AG04450 (cell line): ENCODE measurements at regions of chr3 and their contacts with region 1.

Region 1: GRCh38 chr3:141000027-141000663 is 51.0 kb upstream of the SPSB4 start:
- DNase-seq: peak; percentile 7
- H3K4me3 ChIP-seq: no peak overlapping the region
- H3K27ac ChIP-seq: no peak overlapping the region
- H3K27me3 ChIP-seq: peaks cover 6% of the 10 kb centered on the region
- CTCF ChIP-seq: peak; percentile 78

Region 2: DNA sequence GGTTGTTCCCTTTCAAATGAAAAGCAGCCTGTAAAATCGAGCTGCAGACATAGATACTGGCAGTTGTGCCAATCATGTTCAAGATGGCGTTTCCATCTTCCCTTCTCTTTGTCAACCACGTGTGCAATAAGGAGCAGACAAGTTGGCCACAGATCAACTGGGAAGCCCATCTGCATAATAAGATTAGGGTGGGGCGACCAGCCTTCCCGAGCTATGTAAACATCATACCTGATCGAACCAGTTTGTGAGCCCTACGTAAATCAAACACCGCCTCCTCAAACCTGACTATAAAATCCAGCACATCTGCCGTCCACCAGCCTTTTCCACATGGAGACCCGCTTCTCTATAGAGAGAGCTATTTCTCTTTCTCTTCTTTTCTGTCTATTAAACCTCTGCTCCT is 285.1 kb before region 1 on chr3:
- CTCF ChIA-PET with region 1: no interaction called
- POLR2A ChIA-PET with region 1: no interaction called
- DNase-seq: no peak
- H3K4me3 ChIP-seq: no peak overlapping the region
- H3K27ac ChIP-seq: no peak overlapping the region
- H3K27me3 ChIP-seq: no peaks in the 10 kb centered on the region
- CTCF ChIP-seq: no peak

Region 3: DNA sequence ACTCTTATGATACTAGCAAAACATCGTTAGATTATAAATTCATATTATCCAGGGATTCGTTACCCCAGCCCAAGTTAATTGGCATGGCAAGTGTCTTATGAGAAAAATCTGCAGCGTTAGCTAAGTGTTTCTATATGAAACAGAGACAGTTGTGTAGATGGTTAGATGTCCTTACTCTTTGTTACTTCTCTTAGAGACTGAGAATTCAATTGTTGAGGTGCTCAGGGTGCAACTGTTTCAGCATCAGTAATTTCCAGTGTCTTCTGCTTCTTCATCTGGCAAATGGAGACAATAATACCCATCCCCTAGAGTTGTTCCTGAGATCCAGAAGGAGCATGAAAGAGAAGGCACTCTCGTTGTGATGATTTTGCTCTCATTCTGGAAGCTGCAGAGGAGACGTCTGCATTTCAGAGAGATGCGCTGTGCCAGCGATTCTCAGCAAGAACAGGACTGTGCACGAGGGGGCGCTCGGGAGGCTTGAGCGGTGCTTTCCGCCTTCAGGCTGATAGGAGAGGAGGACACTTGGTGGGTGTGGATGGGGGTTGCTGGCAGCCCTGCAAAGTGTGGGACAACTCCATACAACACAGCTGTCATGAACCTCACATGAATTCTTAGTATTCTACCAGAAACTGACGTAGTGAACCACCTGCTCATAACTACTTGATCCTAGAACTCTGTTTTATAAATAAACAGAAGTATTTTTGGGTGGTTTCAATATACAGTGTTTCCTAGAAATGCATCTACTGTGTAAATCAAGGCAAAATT is 11.3 kb after region 1 on chr3:
- CTCF ChIA-PET with region 1: interaction called, 63 read pairs
- POLR2A ChIA-PET with region 1: no interaction called
- DNase-seq: peak; percentile 20
- H3K4me3 ChIP-seq: no peak overlapping the region
- H3K27ac ChIP-seq: no peak overlapping the region
- H3K27me3 ChIP-seq: peaks cover 2% of the 10 kb centered on the region
- CTCF ChIP-seq: peak; percentile 84

Region 4: GRCh38 chr3:141105828-141106628 is 105.9 kb after region 1 on chr3:
- CTCF ChIA-PET with region 1: interaction called, 19 read pairs
- POLR2A ChIA-PET with region 1: no interaction called
- DNase-seq: peak; percentile 69
- H3K4me3 ChIP-seq: no peak overlapping the region
- H3K27ac ChIP-seq: no peak overlapping the region
- H3K27me3 ChIP-seq: peaks cover 26% of the 10 kb centered on the region
- CTCF ChIP-seq: peak; percentile 74